ENCODE measurements at regions of chr6 and their contacts with region 1.

Region 1: GRCh38 chr6:5619249-5619648 is 357.9 kb downstream of the FARS2 start:
- DNase-seq: peak; percentile 36
- CTCF ChIP-seq: no peak

Region 2: GRCh38 chr6:3990692-3991501 is 1628.4 kb before region 1 on chr6:
- CTCF ChIA-PET with region 1: no interaction called
- POLR2A ChIA-PET with region 1: interaction called, 10 read pairs
- DNase-seq: peak; percentile 73
- CTCF ChIP-seq: peak; percentile 88

Measured in GM10248 (cell line).